ENCODE measurements at regions of chr1 and their contacts with region 1.

Region 1: GRCh38 chr1:119613769-119614720 is 34.0 kb downstream of the ZNF697 start:
- DNase-seq: peak; percentile 90
- ATAC-seq: peak; percentile 94

Region 2: GRCh38 chr1:119662034-119662437 is 48.0 kb after region 1 on chr1:
- intact Hi-C with region 1: loop called (anchors 5 kb)
- DNase-seq: no peak
- ATAC-seq: no peak

Measured in sciatic nerve (tissue), 2 donors.